Activated CD4-positive, alpha-beta memory T cell treated with anti-CD3 and anti-CD28 coated beads for 36 hours (primary cell): ENCODE measurements at regions of chr7 and their contacts with region 1.

Region 1: DNA sequence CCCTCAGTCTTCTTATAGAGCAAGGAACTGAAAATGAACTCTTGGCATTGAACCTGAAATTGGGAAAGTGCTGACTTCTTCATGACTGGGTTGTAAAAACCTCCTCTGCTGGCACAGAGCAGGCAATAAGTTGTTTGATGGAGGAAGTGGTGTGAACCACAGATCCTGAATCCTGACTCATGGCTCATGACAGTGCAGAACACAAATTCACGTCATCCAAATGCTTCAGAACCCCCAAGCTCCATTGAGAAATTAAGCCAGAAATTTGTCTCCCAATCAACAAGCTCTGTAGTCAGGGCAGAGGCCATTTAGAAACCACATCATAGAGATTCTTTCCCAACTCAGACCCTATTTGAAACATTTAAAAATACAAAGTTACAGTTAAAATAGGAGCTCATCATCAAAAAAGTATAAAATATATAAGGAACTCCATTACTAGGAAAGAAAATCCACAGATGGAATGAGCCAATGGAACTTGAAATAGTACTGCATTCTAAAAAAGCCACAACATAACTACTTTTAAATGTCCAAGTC is 10.3 kb upstream of the STK17A start:
- DNase-seq: peak; percentile 67
- H3K4me3 Mint-ChIP-seq: no peak overlapping the region
- H3K27ac Mint-ChIP-seq: peak overlapping the region; percentile 44
- H3K4me1 Mint-ChIP-seq: peaks cover 26% of the 10 kb centered on the region
- H3K27me3 Mint-ChIP-seq: no peaks in the 10 kb centered on the region

Region 2: DNA sequence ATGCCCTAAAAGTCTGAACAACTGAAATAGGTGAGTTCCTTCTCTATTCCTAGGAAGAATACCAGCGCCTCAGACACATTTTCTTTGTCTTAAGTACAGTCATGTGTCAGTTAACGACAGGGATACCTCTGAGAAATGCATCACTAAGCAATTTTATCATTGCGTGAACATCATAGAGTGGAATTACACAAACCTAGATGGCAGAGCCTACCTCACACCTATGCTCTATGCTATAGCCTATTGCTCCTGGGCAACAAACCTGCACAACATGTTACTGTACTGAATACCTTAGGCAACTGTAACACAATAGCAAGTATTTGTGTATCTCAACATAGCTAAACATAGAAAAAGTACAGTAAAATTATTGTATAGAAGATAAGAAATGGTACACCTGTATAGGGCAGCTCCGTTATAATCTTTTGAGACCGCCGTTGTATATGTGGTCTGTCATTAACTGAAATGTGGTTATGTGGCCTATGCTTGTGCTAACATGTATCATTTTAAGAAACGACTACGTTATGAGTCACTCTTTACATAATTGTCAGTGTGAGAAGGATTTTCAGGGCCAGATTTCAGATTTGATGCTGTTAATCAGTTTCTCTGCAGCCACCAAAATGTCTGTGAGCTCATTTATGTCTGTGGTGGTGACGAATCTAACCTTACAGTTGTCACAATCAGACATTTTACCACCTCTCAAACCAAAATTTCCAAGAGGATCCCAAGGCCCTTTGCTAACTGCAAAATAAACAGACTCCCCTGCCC is 55.8 kb before region 1 on chr7:
- CTCF ChIA-PET with region 1: no interaction called
- POLR2A ChIA-PET with region 1: no interaction called
- intact Hi-C with region 1: loop called (anchors 2 kb)
- DNase-seq: peak; percentile 11
- H3K4me3 Mint-ChIP-seq: no peak overlapping the region
- H3K27ac Mint-ChIP-seq: no peak overlapping the region
- H3K4me1 Mint-ChIP-seq: peaks cover 10% of the 10 kb centered on the region
- H3K27me3 Mint-ChIP-seq: peaks cover 23% of the 10 kb centered on the region